HAP-1 (cell line): ENCODE measurements at regions of chr5 and their contacts with region 1.

Region 1: DNA sequence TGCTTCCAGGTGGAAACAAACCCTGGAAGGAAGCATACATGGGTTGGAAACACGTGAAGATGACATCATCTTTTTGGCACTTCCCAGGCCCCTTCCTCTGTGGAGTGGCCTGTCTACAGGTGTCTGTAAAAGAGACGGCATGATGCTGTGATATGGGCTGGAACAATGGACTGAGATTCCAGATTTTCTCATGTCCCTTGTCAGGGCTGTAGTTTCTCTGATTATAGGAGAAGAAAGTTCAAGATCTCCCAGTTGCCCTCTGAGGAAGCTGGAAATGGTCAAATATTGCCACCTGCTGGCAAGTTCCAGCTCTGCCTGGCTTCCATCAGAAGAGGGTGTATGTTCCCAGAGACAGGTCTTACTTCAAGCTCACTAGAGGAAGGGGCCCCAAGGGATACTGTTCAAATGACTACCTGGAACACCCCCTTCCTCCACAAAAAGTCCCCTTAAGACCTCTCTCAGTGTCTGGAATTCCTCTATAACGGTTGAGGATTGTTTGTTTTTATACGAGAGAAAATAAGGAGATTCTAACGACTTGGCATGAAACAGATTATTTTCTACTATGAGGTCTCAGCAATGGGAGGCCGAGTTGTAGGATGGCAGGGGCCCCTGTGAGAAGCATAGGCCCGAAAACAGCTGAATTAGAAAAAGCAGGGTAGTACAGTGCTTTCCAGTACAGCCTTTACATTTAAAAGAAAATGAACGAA is 7.3 kb upstream of the ANXA6 start:
- DNase-seq: peak; percentile 65 to 80
- H3K4me3 ChIP-seq: no peak overlapping the region
- H3K4me1 ChIP-seq: no peaks in the 10 kb centered on the region
- H3K27me3 ChIP-seq: no peaks in the 10 kb centered on the region

Region 2: DNA sequence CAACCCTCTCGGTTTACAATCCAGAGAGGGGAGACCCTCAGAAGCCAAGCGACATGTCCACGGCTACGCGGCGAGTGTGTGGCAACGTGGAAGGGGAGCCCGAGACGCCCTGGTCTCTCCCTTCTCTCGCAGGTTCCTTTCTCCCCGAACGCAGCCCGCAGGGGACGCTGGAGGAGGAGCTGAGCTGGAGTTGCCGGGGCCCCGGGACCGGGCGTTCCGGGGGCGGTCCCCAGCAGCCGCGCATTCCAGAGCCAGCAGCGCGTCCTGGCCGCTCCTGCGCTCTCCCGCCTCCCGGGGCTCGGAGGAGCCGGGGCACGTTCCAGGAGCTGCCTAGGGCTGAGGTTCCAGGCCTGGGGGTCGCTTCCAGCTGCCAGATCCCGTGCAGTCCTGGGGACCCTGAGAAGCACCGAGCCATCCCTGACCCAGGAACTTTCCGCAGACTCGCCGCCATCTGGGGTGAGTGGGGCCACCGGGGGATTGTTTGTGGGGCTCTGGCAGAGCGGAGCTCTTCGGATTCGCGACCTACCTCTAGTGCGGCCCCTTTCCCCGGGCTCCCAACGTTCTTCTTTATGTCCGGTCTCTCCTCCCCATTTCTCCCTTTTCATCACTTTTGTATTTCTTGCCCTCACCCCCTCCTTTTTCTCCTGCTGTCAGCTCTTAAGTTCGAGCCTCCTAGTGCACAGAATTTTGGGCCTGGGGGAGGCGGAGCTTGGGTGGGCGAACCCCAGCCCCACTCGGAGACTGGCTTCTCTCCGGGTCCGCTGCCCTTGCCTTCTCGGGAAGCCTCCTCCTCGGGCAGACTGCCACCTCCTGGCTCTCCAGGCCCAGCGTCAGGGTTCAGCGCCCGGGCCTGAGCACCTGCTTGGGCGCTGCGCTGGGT is 386.1 kb before region 1 on chr5 and contains the start of gene SMIM3:
- in situ Hi-C with region 1: loop called (anchors 25 kb)
- DNase-seq: peak; percentile 77 to 85
- H3K4me3 ChIP-seq: peak within 1 kb of the TSS; percentile 61
- H3K4me1 ChIP-seq: peaks cover 3% of the 10 kb centered on the region
- H3K27me3 ChIP-seq: no peaks in the 10 kb centered on the region

Region 3: DNA sequence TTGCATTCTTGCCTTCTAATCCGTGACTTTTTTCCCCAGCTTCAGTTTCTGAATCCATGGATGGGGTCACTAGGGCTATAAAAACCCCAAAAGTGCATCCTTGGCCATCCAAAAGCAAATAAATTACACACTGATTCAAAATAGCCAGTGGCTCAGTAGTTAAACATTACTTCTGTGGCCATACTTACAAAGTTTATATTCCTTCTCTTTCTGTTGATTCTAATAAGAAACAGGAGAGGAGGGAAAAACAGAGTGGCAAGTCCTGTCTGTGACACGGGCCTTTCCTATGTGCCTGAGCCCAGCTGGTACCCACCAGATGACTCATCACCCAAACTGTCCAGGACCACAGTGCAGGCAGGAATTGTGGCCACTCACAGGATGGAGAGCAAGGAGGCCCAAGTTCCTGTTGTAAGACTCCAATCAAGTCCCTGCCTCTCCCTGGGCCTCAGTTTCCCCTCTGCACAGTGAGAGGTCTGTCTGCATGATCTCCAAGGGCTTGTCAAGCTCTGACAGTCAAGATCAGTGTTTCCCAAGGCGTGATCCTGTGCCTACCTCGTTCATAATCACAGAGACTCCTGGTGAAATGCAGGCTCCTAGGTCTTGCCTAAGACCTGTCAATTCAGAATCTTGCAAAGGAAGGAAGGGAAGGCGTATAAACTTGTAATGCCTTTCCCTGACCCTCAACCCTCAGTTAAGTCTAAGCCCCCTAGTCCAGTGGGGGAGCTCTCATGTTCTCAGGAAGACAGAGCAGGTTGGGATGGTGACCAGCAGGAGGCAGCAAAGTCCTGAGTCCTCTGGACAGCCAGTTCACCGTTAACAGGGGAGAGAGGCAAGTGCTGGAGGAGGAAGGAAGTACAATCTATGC is 113.5 kb before region 1 on chr5:
- in situ Hi-C with region 1: loop called (anchors 10 kb)
- DNase-seq: peak; percentile 51 to 80
- H3K4me3 ChIP-seq: no peak overlapping the region
- H3K4me1 ChIP-seq: no peaks in the 10 kb centered on the region
- H3K27me3 ChIP-seq: no peaks in the 10 kb centered on the region

Region 4: DNA sequence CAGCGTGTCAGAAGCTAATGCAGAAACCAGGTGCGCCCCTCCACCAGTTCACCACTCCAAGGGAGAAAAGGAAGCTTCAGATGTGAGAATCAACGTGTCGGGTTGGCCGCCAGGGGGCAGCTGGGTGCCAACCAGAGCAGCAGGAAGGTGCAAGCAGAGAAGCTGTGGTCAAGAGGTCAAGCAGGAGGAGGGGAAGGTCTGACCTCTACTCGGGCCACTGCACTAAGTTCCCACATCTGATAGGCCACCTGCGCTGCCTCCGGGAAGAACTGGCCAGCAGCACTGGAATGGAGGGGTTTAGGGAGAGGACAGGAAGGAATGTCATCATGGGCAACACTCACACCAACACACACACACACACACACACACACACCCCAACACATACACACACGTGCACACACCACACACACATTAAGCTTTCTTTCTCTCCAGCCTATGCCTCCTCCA is 38.6 kb before region 1 on chr5:
- in situ Hi-C with region 1: loop called (anchors 5 kb)
- DNase-seq: peak; percentile 40 to 67
- H3K4me3 ChIP-seq: no peak overlapping the region
- H3K4me1 ChIP-seq: no peaks in the 10 kb centered on the region
- H3K27me3 ChIP-seq: no peaks in the 10 kb centered on the region